ENCODE measurements at regions of chr9 and their contacts with region 1.

Region 1: GRCh38 chr9:115008536-115009270 is 78.3 kb upstream of the TNFSF8 start:
- DNase-seq: peak; percentile 69
- H3K4me3 ChIP-seq: no peak overlapping the region
- H3K27ac ChIP-seq: no peak overlapping the region
- H3K27me3 ChIP-seq: no peaks in the 10 kb centered on the region
- CTCF ChIP-seq: no peak

Region 2: GRCh38 chr9:114662081-114662989 is 346.4 kb before region 1 on chr9:
- CTCF ChIA-PET with region 1: interaction called, 14 read pairs
- POLR2A ChIA-PET with region 1: no interaction called
- DNase-seq: no peak
- H3K4me3 ChIP-seq: no peak overlapping the region
- H3K27ac ChIP-seq: no peak overlapping the region
- H3K27me3 ChIP-seq: peaks cover 17% of the 10 kb centered on the region
- CTCF ChIP-seq: peak; percentile 93

Region 3: DNA sequence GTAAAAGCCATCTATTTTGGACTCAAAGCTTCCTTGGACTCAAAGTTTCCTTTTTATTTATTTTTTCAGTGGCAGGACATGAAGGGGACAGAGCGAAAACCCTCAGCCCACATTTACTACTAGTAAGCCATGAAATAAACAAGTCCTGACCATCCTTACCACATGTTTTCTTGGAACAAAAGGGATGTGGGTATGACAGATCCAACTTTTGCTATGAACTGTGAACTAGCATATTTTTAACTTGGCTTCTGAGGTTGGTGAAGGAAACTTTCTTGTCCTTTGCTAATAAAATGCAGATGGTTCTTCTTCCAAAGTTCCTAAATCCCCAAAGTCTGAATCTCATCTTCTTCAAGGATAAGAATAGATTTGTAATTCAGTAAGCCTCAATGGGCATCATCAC is 232.0 kb after region 1 on chr9:
- CTCF ChIA-PET with region 1: no interaction called
- POLR2A ChIA-PET with region 1: no interaction called
- DNase-seq: no peak
- H3K4me3 ChIP-seq: no peak overlapping the region
- H3K27ac ChIP-seq: no peak overlapping the region
- H3K27me3 ChIP-seq: no peaks in the 10 kb centered on the region
- CTCF ChIP-seq: no peak